Activated T-helper 2 cell treated with anti-CD3 and anti-CD28 coated beads, Interferon-gamma antibody, Interleukin-2, Interleukin-4, amounts not matched to agents 10 μg/mL and 5 μg/mL and 100 μg/mL, durations not matched to agents 14 hours and 24 hours and 36 hours (primary cell): ENCODE measurements at regions of chr1 and their contacts with region 1.

Region 1: GRCh38 chr1:231337472-231338269 is at the start of gene EXOC8:
- DNase-seq: peak; percentile 98
- H3K4me3 Mint-ChIP-seq: peak within 1 kb of the TSS; percentile 99
- H3K27ac Mint-ChIP-seq: peak within 1 kb of the TSS; percentile 99
- H3K4me1 Mint-ChIP-seq: peaks cover 42% of the 10 kb centered on the region
- H3K27me3 Mint-ChIP-seq: peaks cover 2% of the 10 kb centered on the region
- total RNA-seq, gene EXOC8: 12.8 and 13.2 TPM in 2 replicates

Region 2: DNA sequence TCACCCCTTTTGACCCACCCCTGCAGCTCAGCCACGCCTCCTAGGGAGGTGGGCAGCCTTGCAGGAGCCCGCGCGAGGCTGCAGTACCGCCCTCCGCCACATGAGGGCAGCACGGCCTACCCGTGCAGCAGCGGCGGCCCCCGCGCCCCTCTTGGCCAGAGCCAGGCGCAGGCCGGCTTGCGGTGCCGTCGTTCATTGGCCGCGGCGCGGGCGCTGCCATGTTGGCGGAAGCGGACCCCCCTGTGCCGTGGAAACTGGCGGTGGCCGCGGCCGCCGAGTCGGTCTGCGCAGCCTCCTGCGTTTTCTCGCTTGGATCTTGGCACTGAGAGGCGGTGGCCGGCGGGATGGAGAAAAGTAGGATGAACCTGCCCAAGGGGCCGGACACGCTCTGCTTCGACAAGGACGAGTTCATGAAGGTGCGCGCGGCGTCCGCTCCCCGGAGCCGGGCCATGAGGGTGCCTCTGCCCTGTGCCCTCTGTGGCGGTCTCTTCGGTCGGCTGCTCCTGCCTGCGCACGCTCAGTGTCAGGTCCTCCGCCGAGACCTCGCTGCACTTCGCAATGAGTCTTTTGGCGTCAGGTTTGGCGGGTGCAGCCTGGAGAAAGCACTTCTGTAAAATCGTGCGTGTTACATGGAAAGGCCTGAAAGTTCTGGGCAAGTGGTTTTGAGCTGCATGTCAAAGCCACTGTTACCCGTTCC is 695.3 kb before region 1 on chr1 and contains the start of gene COG2:
- intact Hi-C with region 1: loop called (anchors 1 kb)
- DNase-seq: peak; percentile 92
- H3K4me3 Mint-ChIP-seq: peak within 1 kb of the TSS; percentile 98
- H3K27ac Mint-ChIP-seq: peak within 1 kb of the TSS; percentile 95
- H3K4me1 Mint-ChIP-seq: peaks cover 41% of the 10 kb centered on the region
- H3K27me3 Mint-ChIP-seq: peaks cover 19% of the 10 kb centered on the region
- total RNA-seq, gene COG2: 36.9 and 38.8 TPM in 2 replicates

Region 3: DNA sequence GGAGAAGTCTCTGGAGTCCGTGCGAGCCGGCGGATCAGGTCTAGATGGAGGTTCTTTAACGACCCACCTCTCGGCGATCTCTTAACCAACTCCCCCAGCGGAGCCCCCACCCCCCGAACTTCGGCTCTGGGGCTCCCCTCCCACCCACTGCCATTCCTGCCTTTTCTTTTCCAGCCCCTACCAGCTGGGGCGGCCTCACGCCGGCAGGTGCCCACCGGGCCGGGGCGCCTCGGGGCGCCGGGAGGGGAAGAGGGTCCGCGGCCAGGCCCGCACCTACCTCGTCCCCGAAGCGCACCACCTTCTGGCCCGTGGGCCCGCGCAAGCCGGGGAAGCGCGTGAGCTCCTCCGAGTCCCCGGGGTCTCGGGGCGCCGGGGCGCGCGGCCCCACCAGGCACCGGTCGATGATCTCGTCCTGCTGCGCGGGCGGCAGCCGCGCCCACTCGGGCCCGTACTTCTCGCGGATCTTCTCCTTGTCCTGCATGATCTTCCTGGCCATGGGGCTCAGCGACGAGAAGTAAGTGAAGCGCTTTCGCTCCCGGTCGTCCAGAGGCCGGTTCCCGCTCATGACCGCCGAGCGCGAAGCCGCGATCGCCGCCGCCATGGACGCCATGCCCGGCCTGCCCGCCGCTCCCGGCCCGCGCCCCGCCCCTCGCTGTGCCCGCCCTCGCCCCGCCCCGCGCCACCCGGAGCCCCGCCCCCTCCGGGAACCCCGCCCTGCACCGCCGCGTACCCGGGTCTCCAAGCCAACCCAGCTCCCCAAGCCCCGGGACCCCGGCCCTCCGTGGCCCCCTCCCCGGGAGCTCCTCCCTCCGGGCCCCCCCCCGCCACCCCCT is 469.6 kb before region 1 on chr1 and contains the start of gene C1orf198:
- intact Hi-C with region 1: loop called (anchors 5 kb)
- DNase-seq: peak; percentile 67
- H3K4me3 Mint-ChIP-seq: peak within 1 kb of the TSS; percentile 82
- H3K27ac Mint-ChIP-seq: peak within 1 kb of the TSS; percentile 64
- H3K4me1 Mint-ChIP-seq: peaks cover 19% of the 10 kb centered on the region
- H3K27me3 Mint-ChIP-seq: peaks cover 31% of the 10 kb centered on the region
- total RNA-seq, gene C1orf198: 8.9 and 9.1 TPM in 2 replicates

Region 4: GRCh38 chr1:231240883-231241735 is 96.6 kb before region 1 on chr1 and contains the start of gene GNPAT:
- intact Hi-C with region 1: loop called (anchors 1 kb)
- DNase-seq: peak; percentile 89
- H3K4me3 Mint-ChIP-seq: peak within 1 kb of the TSS; percentile 99
- H3K27ac Mint-ChIP-seq: peak within 1 kb of the TSS; percentile 96
- H3K4me1 Mint-ChIP-seq: peaks cover 44% of the 10 kb centered on the region
- H3K27me3 Mint-ChIP-seq: no peaks in the 10 kb centered on the region
- total RNA-seq, gene GNPAT: 46.9 and 50.9 TPM in 2 replicates

Region 5: GRCh38 chr1:231272880-231273279 is 64.8 kb before region 1 on chr1:
- intact Hi-C with region 1: loop called (anchors 2 kb)
- DNase-seq: peak; percentile 16
- H3K4me3 Mint-ChIP-seq: peak overlapping the region; percentile 71
- H3K27ac Mint-ChIP-seq: peak overlapping the region; percentile 99
- H3K4me1 Mint-ChIP-seq: peaks cover 36% of the 10 kb centered on the region
- H3K27me3 Mint-ChIP-seq: no peaks in the 10 kb centered on the region

Region 6: DNA sequence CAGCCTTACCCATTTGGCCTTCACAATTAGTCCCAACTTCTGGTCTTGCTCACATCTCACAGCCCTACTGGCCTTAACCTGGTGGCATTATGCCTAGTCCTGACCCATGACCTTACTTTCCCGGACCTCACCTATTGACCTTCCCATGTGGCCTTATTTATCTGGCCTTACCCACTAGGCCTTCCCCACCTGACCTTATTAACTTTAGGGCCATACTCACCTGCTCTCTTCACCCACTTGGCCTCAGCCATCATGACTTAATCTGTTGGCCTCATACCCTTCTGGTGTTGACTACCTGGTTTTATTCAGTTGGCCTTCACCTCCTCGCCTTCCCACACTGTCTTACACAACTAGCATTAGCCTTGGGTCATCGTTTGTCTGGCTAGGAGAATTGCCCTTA is 35.7 kb before region 1 on chr1:
- intact Hi-C with region 1: no loop called
- DNase-seq: no peak
- H3K4me3 Mint-ChIP-seq: no peak overlapping the region
- H3K27ac Mint-ChIP-seq: no peak overlapping the region
- H3K4me1 Mint-ChIP-seq: no peaks in the 10 kb centered on the region
- H3K27me3 Mint-ChIP-seq: no peaks in the 10 kb centered on the region

Region 7: DNA sequence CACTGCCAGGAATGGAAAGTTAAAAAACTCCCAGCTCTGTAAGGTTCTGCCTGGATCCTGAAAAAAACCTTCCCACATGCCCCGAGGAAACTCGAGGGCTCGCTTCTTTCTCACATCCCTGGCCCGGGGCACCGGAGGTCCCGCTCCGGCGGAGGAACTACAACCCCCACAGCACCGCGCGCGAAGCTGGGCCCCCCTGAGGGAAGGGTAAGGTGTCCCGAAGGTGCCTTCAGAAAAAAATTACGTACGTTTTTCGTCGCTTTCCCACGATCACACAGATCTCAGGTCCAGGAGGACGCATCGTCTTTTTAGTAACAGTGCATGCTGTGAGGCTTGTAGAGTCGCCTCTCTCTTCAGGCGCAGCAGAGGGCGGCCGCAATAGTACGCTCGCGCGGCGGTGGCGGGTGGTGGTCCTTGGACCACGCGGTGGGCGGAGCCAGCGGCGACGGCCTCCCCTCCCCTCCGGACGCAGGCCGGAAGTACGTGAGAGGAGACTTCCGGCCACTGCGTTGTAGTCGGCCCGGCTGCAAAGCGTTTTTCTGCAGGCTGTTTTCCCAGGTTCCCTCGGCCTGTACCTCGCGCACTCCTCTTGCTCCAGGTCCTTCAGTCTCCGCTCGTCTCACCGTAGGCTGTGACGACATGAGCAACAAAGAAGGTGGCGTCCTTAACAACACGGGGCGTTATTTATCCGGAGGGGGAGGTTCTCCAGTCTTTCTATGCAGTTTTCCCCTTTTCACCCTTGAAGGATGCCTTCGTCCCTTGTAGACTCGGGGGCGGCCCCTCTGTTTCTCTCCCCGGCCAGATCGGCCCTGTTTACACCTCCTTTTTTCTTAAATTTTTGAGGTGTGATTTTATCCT is 190.7 kb after region 1 on chr1 and contains the start of gene TSNAX:
- intact Hi-C with region 1: loop called (anchors 1 kb)
- DNase-seq: peak; percentile 89
- H3K4me3 Mint-ChIP-seq: peak within 1 kb of the TSS; percentile 97
- H3K27ac Mint-ChIP-seq: peak within 1 kb of the TSS; percentile 99
- H3K4me1 Mint-ChIP-seq: peaks cover 30% of the 10 kb centered on the region
- H3K27me3 Mint-ChIP-seq: no peaks in the 10 kb centered on the region
- total RNA-seq, gene TSNAX: 43.9 and 44.4 TPM in 2 replicates

Region 8: GRCh38 chr1:231603598-231604275 is 266.1 kb after region 1 on chr1:
- intact Hi-C with region 1: loop called (anchors 5 kb)
- DNase-seq: peak; percentile 34
- H3K4me3 Mint-ChIP-seq: peak overlapping the region; percentile 87
- H3K27ac Mint-ChIP-seq: peak overlapping the region; percentile 69
- H3K4me1 Mint-ChIP-seq: peaks cover 8% of the 10 kb centered on the region
- H3K27me3 Mint-ChIP-seq: peaks cover 27% of the 10 kb centered on the region